ENCODE measurements at regions of chr1 and their contacts with region 1.

Region 1: DNA sequence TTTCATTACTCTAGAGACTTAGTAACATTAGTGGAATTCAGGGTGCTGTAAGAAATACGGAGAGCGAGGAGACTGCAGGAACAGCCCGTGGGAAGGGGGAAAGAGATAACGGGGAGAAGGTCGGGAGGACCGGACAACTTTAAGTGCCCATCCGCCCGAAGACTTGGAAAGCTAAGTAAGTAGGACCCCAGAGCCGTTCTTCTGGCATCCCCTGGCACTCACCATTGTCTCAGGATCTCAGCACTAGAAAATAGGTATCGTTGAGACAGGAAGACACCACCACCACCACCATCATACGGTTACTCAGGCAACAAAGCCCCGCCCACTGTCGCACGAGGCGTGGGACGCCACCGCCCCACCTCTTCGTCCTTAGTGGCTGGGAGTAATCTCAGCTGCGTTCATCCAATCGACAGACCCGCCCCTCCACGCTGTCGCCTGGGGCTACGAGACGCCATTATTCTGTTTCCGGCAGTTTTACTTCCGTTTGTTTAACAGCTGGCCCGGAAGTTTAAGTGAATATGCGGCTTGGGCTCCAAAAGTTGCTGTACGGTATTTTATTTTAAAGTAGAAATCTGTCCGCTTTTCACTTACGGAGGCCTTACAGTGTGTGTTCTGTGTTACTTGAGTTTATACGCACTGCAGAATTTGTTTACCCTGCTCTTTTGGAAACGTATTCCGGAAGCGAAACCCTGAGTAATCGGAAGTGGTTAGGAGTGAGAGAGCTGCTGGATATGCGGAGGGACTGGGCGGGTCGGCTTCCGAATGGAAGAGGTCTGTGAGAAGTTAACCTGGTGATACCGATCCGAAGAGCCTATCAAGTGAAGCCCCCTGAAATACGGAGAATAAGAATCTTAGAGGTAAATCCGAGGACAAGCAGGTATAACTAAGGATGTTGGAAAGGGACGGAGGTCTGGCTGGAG is at the starts of genes BLZF1 and NME7:
- DNase-seq: peak; percentile 94
- ATAC-seq: peak; percentile 99
- H3K4me3 Mint-ChIP-seq: peak within 1 kb of the TSS; percentile 56
- H3K27ac Mint-ChIP-seq: no peak within 1 kb of the TSS
- H3K4me1 Mint-ChIP-seq: peaks cover 18% of the 10 kb centered on the region
- H3K27me3 Mint-ChIP-seq: no peaks in the 10 kb centered on the region
- CTCF ChIP-seq: no peak
- total RNA-seq, gene BLZF1: 13.8 and 14.3 TPM in 2 replicates
- total RNA-seq, gene NME7: 14.5 and 16.0 TPM in 2 replicates

Region 2: GRCh38 chr1:168225476-168226190 is 1142.1 kb before region 1 on chr1 and contains the start of gene SFT2D2:
- CTCF ChIA-PET with region 1: no interaction called
- POLR2A ChIA-PET with region 1: no interaction called
- intact Hi-C with region 1: loop called (anchors 2 kb)
- DNase-seq: peak; percentile 85
- ATAC-seq: peak; percentile 92
- H3K4me3 Mint-ChIP-seq: peak within 1 kb of the TSS; percentile 96
- H3K27ac Mint-ChIP-seq: peak within 1 kb of the TSS; percentile 93
- H3K4me1 Mint-ChIP-seq: peaks cover 47% of the 10 kb centered on the region
- H3K27me3 Mint-ChIP-seq: no peaks in the 10 kb centered on the region
- CTCF ChIP-seq: no peak
- total RNA-seq, gene SFT2D2: 62.7 and 63.4 TPM in 2 replicates

Region 3: DNA sequence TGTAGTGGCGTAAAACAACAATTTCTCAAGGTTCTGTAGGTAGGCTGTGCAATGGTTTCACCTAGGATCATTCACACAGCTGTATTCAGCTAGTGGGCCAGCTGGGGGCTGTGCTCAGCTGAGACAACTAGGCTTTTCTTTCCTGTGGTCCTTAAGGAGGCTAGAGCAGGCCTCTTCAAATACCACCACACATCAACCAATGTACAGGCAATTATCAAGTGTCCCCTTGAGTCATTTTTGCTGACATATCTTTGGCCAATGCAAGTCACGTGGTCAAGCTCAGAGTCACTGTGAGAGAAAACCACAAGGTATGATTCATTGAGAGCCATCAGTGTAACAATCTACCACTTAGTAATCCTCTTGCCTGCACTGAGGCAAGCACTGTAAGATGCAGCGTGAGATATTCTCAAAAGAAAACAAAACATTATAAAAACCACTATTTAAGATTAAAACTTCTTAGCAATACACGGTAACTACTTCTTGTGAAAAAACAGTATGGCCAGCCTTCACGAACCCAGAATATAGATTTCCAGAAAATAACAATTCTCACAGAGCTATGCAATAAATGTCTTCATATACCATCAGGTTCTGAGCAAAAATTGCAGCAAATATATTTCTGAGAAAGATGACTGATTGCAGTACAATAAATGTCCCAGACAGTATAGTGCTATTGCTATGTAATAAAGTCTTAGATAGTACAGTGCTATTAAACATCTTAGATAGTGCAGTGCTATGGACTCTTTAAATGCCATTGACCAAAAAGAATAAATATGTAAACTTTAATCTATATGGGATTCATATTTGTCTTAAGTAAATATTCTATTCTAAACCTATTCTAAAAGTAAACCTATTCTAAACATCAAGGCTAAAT is 55.4 kb before region 1 on chr1:
- CTCF ChIA-PET with region 1: no interaction called
- POLR2A ChIA-PET with region 1: no interaction called
- intact Hi-C with region 1: no loop called
- DNase-seq: no peak
- ATAC-seq: peak; percentile 37
- H3K4me3 Mint-ChIP-seq: no peak overlapping the region
- H3K27ac Mint-ChIP-seq: no peak overlapping the region
- H3K4me1 Mint-ChIP-seq: peaks cover 4% of the 10 kb centered on the region
- H3K27me3 Mint-ChIP-seq: no peaks in the 10 kb centered on the region
- CTCF ChIP-seq: no peak

Region 4: DNA sequence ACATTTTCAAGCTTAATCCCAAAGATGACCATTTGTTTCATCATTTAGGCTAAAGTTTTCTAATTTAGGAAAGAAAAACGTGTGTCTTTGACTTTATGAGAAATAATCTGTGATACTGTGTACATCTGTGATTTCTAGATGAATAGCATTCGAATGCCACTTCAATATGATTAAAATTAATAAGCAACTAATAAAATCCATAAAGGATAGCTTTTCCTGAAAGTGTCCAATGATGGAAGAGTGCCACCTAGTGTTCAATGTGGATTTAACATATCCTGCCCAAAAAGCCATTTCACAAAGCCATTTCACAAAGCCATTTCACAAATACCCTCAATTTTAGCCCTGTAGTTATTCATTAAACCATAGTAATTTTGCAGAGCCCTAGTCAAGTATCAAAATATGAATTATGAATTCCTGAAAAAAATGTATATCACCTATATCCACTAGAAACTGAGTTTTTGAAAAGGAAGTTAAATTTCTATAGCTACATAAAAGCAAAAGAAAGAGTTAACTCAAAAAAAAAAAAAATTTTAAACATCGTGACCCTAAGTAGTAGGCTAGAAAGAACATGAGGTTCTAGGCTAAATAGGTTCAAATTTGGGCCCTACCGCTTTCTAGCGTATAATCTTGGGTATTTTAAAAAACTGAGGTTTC is 19.2 kb before region 1 on chr1:
- CTCF ChIA-PET with region 1: interaction called, 10 read pairs
- POLR2A ChIA-PET with region 1: no interaction called
- intact Hi-C with region 1: no loop called
- DNase-seq: no peak
- ATAC-seq: no peak
- H3K4me3 Mint-ChIP-seq: no peak overlapping the region
- H3K27ac Mint-ChIP-seq: no peak overlapping the region
- H3K4me1 Mint-ChIP-seq: no peaks in the 10 kb centered on the region
- H3K27me3 Mint-ChIP-seq: no peaks in the 10 kb centered on the region
- CTCF ChIP-seq: peak; percentile 35

Region 5: GRCh38 chr1:169694304-169695075 is 326.7 kb after region 1 on chr1:
- CTCF ChIA-PET with region 1: no interaction called
- POLR2A ChIA-PET with region 1: no interaction called
- intact Hi-C with region 1: loop called (anchors 10 kb)
- DNase-seq: no peak
- ATAC-seq: peak; percentile 9
- H3K4me3 Mint-ChIP-seq: peak overlapping the region; percentile 62
- H3K27ac Mint-ChIP-seq: peak overlapping the region; percentile 90
- H3K4me1 Mint-ChIP-seq: peaks cover 97% of the 10 kb centered on the region
- H3K27me3 Mint-ChIP-seq: no peaks in the 10 kb centered on the region
- CTCF ChIP-seq: no peak

Region 6: GRCh38 chr1:170074250-170075157 is 706.8 kb after region 1 on chr1 and contains the start of gene KIFAP3:
- CTCF ChIA-PET with region 1: no interaction called
- POLR2A ChIA-PET with region 1: no interaction called
- intact Hi-C with region 1: loop called (anchors 1 kb)
- DNase-seq: peak; percentile 89
- ATAC-seq: peak; percentile 93
- H3K4me3 Mint-ChIP-seq: peak within 1 kb of the TSS; percentile 94
- H3K27ac Mint-ChIP-seq: peak within 1 kb of the TSS; percentile 87
- H3K4me1 Mint-ChIP-seq: peaks cover 52% of the 10 kb centered on the region
- H3K27me3 Mint-ChIP-seq: peaks cover 2% of the 10 kb centered on the region
- CTCF ChIP-seq: no peak
- total RNA-seq, gene KIFAP3: 11.8 and 12.7 TPM in 2 replicates